HepG2 (cell line): ENCODE measurements at regions of chr2 and their contacts with region 1.

Region 1: GRCh38 chr2:142682528-142682927 is 194.9 kb upstream of the KYNU start:
- DNase-seq: peak; percentile 32
- ATAC-seq: no peak
- H3K4me3 ChIP-seq: no peak overlapping the region
- H3K27ac ChIP-seq: no peak overlapping the region
- H3K4me1 ChIP-seq: no peaks in the 10 kb centered on the region
- H3K27me3 ChIP-seq: no peaks in the 10 kb centered on the region; a peak in 1 of 5 replicates
- CTCF ChIP-seq: peak; percentile 40
- EP300 ChIP-seq: no peak
- POLR2A ChIP-seq: no peak
- RAD21 ChIP-seq: no peak

Region 2: DNA sequence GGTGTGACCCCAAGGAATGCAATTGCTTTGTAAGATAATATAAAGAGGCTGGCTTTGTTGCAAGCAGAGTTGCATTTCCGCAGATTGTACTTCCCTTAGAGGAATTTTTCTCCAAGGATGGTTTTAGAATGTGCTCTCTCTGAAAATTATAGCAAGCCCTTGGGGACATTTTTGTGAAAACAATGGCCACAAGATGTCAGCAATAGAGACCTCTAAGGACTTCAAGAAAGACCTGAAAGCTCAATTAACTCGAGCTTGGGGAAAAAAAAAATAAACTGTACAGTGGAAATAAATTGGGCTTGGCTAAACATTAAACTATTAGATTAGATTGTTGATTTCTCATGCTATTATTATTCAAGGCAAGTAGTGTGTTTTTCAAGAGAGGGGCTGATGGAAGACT is 113.6 kb after region 1 on chr2:
- CTCF ChIA-PET with region 1: no interaction called
- POLR2A ChIA-PET with region 1: no interaction called
- in situ Hi-C with region 1: no loop called
- intact Hi-C with region 1: loop called (anchors 2 kb)
- DNase-seq: peak; percentile 31
- ATAC-seq: peak; percentile 60; the same call in 1 of the 3 replicates
- H3K4me3 ChIP-seq: no peak overlapping the region
- H3K27ac ChIP-seq: no peak overlapping the region
- H3K4me1 ChIP-seq: no peaks in the 10 kb centered on the region
- H3K27me3 ChIP-seq: no peaks in the 10 kb centered on the region; a peak in 1 of 5 replicates
- CTCF ChIP-seq: peak; percentile 31; the same call in 1 of the 2 replicates
- EP300 ChIP-seq: no peak
- POLR2A ChIP-seq: no peak
- RAD21 ChIP-seq: 0 out of 2 replicates have a peak, but pooled peaks have one; percentile 21

Region 3: DNA sequence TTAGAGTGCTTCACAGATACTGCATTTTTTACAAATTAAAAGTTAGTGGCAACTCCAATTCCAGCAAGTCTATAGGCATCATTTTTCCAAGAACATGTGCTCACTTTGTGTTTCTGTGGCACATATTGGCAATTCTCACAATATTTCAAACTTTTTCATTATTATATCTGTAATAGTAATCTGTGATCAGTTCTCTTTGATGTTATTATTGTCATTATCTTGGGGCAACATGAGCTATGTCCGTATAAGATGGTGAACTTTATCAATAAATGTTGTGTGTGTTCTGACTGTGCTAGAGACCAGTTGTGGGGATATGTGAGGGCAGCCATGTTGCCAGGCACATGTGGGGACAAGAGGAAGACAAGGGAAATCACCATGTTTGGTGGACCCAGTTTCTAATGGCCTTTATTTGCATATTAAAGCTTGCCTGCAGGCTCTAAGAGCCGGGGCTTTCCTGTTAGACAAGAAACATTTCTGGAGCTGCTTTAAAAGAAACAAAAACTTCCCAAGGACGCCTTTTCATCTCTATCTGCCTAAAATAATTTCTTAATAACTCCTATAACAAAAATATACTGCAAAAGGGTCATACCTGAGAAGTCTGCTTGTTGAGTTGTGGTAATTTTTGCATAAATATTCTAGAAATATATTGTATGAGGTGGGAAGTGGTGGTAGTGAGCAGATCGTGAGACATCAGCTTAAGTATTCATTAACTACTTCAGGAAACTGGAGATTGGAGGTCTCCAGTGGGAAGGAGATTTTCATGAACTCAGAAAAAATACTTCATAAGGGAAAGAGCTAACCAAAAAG is 232.2 kb after region 1 on chr2:
- CTCF ChIA-PET with region 1: no interaction called
- POLR2A ChIA-PET with region 1: no interaction called
- in situ Hi-C with region 1: no loop called
- intact Hi-C with region 1: no loop called
- DNase-seq: no peak
- ATAC-seq: no peak
- H3K4me3 ChIP-seq: no peak overlapping the region
- H3K27ac ChIP-seq: no peak overlapping the region
- H3K4me1 ChIP-seq: peaks cover 13% of the 10 kb centered on the region
- H3K27me3 ChIP-seq: no peaks in the 10 kb centered on the region
- CTCF ChIP-seq: no peak
- EP300 ChIP-seq: no peak
- POLR2A ChIP-seq: no peak
- RAD21 ChIP-seq: no peak

Region 4: DNA sequence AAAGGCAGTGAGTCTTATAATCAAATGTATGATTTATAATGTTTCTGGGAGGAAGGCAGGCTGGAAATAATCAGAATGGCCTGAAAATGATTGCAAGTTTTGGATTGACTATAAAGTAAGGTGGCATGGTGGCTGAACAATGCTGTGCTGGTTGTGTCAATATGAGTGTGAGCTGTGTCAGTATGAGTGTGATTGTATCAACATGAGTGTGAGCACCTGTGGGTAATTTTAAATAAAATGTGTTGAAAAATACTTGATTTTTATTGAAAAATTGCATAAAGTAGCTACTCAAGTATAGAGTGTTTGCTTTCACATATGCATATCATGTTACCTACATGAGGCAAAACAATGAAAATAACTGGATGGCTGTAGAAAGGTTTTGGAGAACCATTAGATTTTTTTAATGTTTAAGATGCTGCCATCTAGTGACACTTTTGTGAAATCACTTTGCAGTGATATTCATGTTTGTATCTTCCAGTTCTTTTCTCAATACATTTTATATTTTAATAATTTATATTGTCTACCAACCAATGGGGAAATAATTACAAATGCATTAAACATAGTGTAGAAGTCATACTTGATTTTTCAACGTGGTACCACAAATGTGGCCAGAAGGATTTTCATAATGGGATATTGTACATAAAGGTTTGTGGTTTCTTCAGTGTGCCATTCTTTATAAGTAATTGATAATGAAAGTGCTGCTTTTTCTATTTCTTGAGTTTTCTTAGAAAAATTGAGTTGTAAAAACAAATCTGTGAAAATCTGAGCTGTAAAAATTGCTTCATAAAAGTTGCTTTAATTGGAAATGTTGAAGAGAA is 298.2 kb after region 1 on chr2:
- CTCF ChIA-PET with region 1: interaction called, 7 read pairs
- POLR2A ChIA-PET with region 1: no interaction called
- in situ Hi-C with region 1: loop called (anchors 5 kb)
- intact Hi-C with region 1: loop called (anchors 1 kb)
- DNase-seq: peak; percentile 49
- ATAC-seq: peak; percentile 59
- H3K4me3 ChIP-seq: no peak overlapping the region
- H3K27ac ChIP-seq: no peak overlapping the region
- H3K4me1 ChIP-seq: peaks cover 32% of the 10 kb centered on the region
- H3K27me3 ChIP-seq: no peaks in the 10 kb centered on the region
- CTCF ChIP-seq: peak; percentile 64
- EP300 ChIP-seq: no peak
- POLR2A ChIP-seq: no peak
- RAD21 ChIP-seq: peak; percentile 62